ENCODE measurements at regions of chr6 and their contacts with region 1.

Region 1: GRCh38 chr6:89371849-89372505 is 19.5 kb upstream of the UBE2J1 start:
- DNase-seq: peak; percentile 81
- H3K4me3 Mint-ChIP-seq: no peak overlapping the region
- H3K27ac Mint-ChIP-seq: peak overlapping the region; percentile 67
- H3K4me1 Mint-ChIP-seq: peaks cover 34% of the 10 kb centered on the region
- H3K27me3 Mint-ChIP-seq: peaks cover 3% of the 10 kb centered on the region

Region 2: DNA sequence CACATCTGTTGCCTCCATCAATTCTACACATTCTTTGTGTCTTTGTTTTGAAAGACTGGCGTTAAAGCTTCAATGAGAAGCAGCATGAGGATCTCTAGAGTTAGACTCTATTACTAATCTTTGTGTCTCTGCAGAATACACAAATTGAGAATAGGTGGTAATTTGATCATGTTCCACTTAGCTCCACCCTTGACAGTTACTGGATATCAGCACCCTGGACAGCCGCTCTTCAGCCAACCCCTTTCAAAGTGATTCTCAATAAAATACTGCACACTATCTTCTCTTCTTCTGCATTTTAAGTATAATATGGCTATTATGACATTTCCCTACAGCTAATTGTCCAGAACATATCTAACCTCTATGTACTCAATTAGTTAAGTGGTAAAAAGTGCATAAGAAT is 1151.5 kb before region 1 on chr6:
- CTCF ChIA-PET with region 1: no interaction called
- POLR2A ChIA-PET with region 1: no interaction called
- DNase-seq: no peak
- H3K4me3 Mint-ChIP-seq: no peak overlapping the region
- H3K27ac Mint-ChIP-seq: no peak overlapping the region
- H3K4me1 Mint-ChIP-seq: no peaks in the 10 kb centered on the region
- H3K27me3 Mint-ChIP-seq: peaks cover 2% of the 10 kb centered on the region

Region 3: GRCh38 chr6:88982720-88983119 is 389.3 kb before region 1 on chr6:
- CTCF ChIA-PET with region 1: interaction called, 21 read pairs
- POLR2A ChIA-PET with region 1: interaction called, 3 read pairs
- DNase-seq: peak; percentile 20
- H3K4me3 Mint-ChIP-seq: no peak overlapping the region
- H3K27ac Mint-ChIP-seq: no peak overlapping the region
- H3K4me1 Mint-ChIP-seq: no peaks in the 10 kb centered on the region
- H3K27me3 Mint-ChIP-seq: peaks cover 4% of the 10 kb centered on the region

Region 4: GRCh38 chr6:89352278-89353117 is 19.5 kb before region 1 on chr6 and contains the start of gene UBE2J1:
- CTCF ChIA-PET with region 1: interaction called, 72 read pairs
- POLR2A ChIA-PET with region 1: interaction called, 38 read pairs
- DNase-seq: peak; percentile 82
- H3K4me3 Mint-ChIP-seq: peak within 1 kb of the TSS; percentile 90
- H3K27ac Mint-ChIP-seq: peak within 1 kb of the TSS; percentile 88
- H3K4me1 Mint-ChIP-seq: peaks cover 68% of the 10 kb centered on the region
- H3K27me3 Mint-ChIP-seq: no peaks in the 10 kb centered on the region
- total RNA-seq, gene UBE2J1: 36.9 to 37.2 TPM

Region 5: GRCh38 chr6:89387516-89388222 is 15.7 kb after region 1 on chr6:
- CTCF ChIA-PET with region 1: interaction called, 12 read pairs
- POLR2A ChIA-PET with region 1: no interaction called
- DNase-seq: no peak
- H3K4me3 Mint-ChIP-seq: no peak overlapping the region
- H3K27ac Mint-ChIP-seq: no peak overlapping the region
- H3K4me1 Mint-ChIP-seq: peaks cover 3% of the 10 kb centered on the region
- H3K27me3 Mint-ChIP-seq: peaks cover 2% of the 10 kb centered on the region

Region 6: GRCh38 chr6:89482126-89482525 is 110.1 kb after region 1 on chr6:
- CTCF ChIA-PET with region 1: no interaction called
- POLR2A ChIA-PET with region 1: no interaction called
- DNase-seq: no peak
- H3K4me3 Mint-ChIP-seq: no peak overlapping the region
- H3K27ac Mint-ChIP-seq: no peak overlapping the region
- H3K4me1 Mint-ChIP-seq: no peaks in the 10 kb centered on the region
- H3K27me3 Mint-ChIP-seq: peaks cover 4% of the 10 kb centered on the region

Region 7: DNA sequence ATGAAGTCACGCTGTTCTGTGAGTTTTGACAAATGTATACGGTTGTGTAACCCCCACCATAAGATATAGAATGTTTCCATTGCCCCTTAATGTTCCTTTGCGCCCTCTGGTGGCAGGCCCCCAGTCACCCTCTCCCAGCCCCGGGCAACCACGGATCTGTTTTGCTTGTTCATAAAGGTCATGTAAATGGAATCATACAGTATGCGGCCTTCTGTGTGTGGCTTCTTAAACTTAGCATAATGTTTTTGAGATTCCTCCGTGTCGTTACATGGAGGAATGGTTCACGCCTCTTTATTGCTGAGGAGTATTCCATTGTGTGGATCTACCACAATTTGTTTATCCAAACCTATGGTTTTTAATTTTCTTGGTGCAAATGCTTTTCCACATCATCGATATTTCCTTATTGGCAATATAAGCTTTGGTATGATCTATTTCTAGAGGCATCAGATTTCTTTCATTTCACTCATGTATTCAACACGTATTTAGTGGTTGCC is 238.2 kb after region 1 on chr6:
- CTCF ChIA-PET with region 1: interaction called, 11 read pairs
- POLR2A ChIA-PET with region 1: interaction called, 3 read pairs
- DNase-seq: peak; percentile 78
- H3K4me3 Mint-ChIP-seq: no peak overlapping the region
- H3K27ac Mint-ChIP-seq: no peak overlapping the region
- H3K4me1 Mint-ChIP-seq: peaks cover 18% of the 10 kb centered on the region
- H3K27me3 Mint-ChIP-seq: no peaks in the 10 kb centered on the region

Measured in activated CD4-positive, alpha-beta memory T cell treated with anti-CD3 and anti-CD28 coated beads, Interleukin-2, amount 10 ng/mL, durations not matched to agents 7 days and 5 days (primary cell).